Activated CD8-positive, alpha-beta T cell treated with anti-CD3 and anti-CD28 coated beads for 36 hours (primary cell): ENCODE measurements at regions of chr14 and their contacts with region 1.

Region 1: DNA sequence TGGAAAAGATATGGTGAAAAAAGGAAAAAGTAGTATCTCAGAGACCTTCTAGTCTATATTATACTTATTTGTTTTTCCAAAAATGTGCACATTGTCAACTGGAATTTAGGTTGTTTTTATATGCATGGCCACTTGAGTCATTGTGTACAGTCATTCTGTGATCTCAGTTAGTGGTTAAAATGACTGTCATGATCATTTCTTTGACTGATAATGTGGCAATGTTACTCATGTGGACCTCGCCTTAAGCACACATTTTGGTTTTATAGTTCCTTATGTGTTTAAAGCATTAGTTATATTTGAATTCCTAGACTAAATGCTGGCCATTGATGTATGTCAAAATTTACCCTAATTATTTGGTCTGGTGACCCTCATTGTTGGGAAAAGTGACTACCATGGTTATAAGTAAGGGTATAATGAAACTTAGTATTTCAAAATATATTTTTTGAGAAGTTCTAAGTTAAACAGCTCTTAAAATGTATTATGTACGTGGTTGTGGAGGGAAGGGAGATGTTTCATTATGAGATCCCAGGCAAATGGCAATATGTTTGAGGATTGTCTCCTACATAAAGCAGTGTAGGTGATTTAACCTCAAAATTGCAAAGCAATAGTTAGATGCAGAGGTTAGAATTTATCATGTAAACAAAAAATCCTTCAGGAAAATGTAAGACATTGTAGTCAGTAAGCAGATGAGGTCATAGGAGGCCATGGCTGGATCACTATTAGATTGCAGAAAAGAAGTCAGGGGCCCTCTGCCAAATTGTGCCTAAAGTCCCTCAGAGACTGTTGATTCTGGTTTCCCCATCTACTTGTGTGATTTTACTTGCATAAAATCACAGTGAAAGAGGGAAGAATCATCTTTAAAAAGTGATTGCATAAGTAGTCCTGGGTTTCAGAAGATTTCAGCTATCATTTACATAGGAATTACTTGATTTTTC is 17.5 kb downstream of the PNMA1 start:
- DNase-seq: peak; percentile 29
- ATAC-seq: peak; percentile 91
- H3K4me3 Mint-ChIP-seq: peak overlapping the region; percentile 47
- H3K27ac Mint-ChIP-seq: peak overlapping the region; percentile 94
- H3K4me1 Mint-ChIP-seq: peaks cover 30% of the 10 kb centered on the region
- H3K27me3 Mint-ChIP-seq: no peaks in the 10 kb centered on the region
- CTCF ChIP-seq: no peak

Region 2: DNA sequence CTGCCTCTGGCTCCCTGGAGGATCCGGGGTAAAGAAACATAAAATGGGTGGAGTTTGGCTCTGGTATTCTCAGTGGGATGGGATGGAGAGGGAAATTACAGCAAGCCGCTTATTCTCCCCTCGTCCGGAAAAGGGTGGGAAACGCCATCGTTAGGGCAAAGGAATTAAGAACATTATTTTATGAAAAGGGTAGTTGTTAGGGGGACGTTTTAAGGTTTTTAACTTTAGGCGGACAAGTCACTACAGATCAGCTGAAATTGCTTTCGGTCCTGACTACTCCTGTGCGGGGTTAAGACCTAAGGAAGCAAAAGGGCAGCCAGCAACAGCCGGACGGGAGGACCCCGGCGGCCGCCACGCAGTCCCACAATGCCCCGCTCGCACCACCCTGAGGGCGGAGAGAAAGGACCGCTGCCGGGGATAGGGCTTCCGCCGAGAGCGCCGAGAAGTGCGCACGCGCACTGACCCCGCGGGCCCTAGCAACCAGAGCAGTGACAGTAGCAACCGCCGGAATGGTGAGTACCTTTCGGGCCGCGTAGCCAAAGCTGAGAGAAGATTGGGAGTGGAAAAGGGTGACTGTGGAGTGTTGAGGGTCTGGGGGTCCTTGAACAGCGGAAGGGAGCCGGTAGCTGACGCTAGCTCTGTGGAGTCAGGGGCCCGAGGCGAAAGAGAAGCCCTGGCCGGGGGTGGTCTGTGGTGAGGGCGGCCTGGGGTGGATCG is 52.0 kb before region 1 on chr14 and contains the start of gene DNAL1:
- CTCF ChIA-PET with region 1: no interaction called
- POLR2A ChIA-PET with region 1: no interaction called
- intact Hi-C with region 1: loop called (anchors 1 kb)
- DNase-seq: peak; percentile 94
- ATAC-seq: peak; percentile 100
- H3K4me3 Mint-ChIP-seq: peak within 1 kb of the TSS; percentile 81
- H3K27ac Mint-ChIP-seq: peak within 1 kb of the TSS; percentile 93
- H3K4me1 Mint-ChIP-seq: peaks cover 11% of the 10 kb centered on the region
- H3K27me3 Mint-ChIP-seq: no peaks in the 10 kb centered on the region
- CTCF ChIP-seq: no peak
- total RNA-seq, gene DNAL1: 4.8 to 5.9 TPM

Region 3: GRCh38 chr14:73713803-73714655 is 17.3 kb after region 1 on chr14 and contains the start of gene PNMA1:
- CTCF ChIA-PET with region 1: interaction called, 7 read pairs
- POLR2A ChIA-PET with region 1: interaction called, 12 read pairs
- intact Hi-C with region 1: no loop called
- DNase-seq: peak; percentile 89
- ATAC-seq: peak; percentile 81
- H3K4me3 Mint-ChIP-seq: peak within 1 kb of the TSS; percentile 93
- H3K27ac Mint-ChIP-seq: peak within 1 kb of the TSS; percentile 98
- H3K4me1 Mint-ChIP-seq: peaks cover 18% of the 10 kb centered on the region
- H3K27me3 Mint-ChIP-seq: no peaks in the 10 kb centered on the region
- CTCF ChIP-seq: no peak
- total RNA-seq, gene PNMA1: 22.9 to 24.1 TPM